ENCODE measurements at regions of chr1 and their contacts with region 1.

Region 1: GRCh38 chr1:242651817-242652216 is 127.3 kb upstream of the PLD5 start:
- H3K4me3 ChIP-seq: no peak overlapping the region
- H3K27ac ChIP-seq: no peak overlapping the region
- H3K4me1 ChIP-seq: no peaks in the 10 kb centered on the region
- CTCF ChIP-seq: peak; percentile 18; the same call in 1 of the 2 replicates

Region 2: DNA sequence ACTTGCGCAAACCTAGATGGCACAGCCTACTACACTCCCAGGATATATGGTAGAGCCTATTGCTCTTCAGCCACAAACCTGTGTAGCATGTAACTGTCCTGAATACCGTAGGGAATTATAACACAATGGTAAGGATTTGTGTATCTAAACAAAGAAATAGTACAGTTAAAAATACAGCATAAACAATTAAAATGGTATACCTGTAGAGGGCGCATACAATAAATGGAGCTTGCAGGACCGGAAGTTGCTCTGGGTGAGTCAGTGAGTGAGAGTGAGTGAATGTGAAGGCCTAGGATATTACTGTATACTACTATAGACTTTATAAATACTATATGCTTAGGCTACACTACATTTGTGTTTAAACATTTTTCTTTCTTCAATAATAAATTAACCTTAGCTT is 226.6 kb before region 1 on chr1:
- CTCF ChIA-PET with region 1: no interaction called
- POLR2A ChIA-PET with region 1: no interaction called
- H3K4me3 ChIP-seq: no peak overlapping the region
- H3K27ac ChIP-seq: no peak overlapping the region
- H3K4me1 ChIP-seq: no peaks in the 10 kb centered on the region
- CTCF ChIP-seq: no peak

Region 3: DNA sequence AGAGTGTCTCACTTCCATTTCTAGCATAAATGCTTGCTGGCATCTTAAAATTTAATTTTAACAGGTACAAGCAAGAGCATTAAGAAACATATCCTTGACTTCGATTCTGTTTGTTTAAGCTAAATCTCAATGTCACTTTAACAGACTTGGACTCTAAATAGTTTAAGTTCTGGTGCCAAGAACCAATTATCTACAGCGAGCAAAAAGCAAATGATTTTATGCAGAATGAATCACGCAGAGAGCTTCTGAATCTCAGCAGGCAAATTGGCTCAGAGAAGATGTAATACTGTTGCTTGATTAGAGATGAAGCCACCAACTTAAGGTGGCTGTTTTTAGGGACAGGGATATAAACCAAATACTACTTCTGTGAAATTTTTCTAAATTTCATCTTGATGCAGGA is 10.4 kb before region 1 on chr1:
- CTCF ChIA-PET with region 1: interaction called, 11 read pairs
- POLR2A ChIA-PET with region 1: no interaction called
- H3K4me3 ChIP-seq: no peak overlapping the region
- H3K27ac ChIP-seq: no peak overlapping the region
- H3K4me1 ChIP-seq: no peaks in the 10 kb centered on the region
- CTCF ChIP-seq: no peak

Region 4: DNA sequence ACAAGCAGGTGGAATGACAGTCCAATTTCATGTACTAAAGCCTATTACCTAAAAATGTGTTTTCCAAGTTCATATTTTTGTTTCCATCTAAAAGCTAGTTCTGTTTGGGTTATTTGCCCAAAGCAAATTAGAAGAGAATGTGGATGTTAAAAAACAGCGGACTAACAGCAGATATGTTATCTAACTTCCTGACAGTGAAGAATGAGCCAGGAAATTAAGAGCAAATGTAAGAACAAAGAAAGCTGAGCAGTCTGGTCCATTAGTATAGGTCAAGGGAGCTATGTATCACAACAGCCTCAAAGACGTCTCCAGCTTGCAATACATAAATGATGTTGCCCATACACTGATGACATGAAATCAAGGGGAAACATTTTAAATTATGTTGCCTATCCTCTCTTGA is 18.2 kb after region 1 on chr1:
- CTCF ChIA-PET with region 1: interaction called, 12 read pairs
- POLR2A ChIA-PET with region 1: no interaction called
- H3K4me3 ChIP-seq: no peak overlapping the region
- H3K27ac ChIP-seq: no peak overlapping the region
- H3K4me1 ChIP-seq: no peaks in the 10 kb centered on the region
- CTCF ChIP-seq: no peak